Activated CD4-positive, alpha-beta T cell treated with anti-CD3 and anti-CD28 coated beads, Interleukin-2, amount 10 ng/mL, durations not matched to agents 7 days and 5 days (primary cell): ENCODE measurements at regions of chrX and their contacts with region 1.

Region 1: GRCh38 chrX:107672955-107673378 is 44.7 kb downstream of the PRPS1 start:
- DNase-seq: peak; percentile 83
- H3K4me3 Mint-ChIP-seq: peak overlapping the region; percentile 57
- H3K27ac Mint-ChIP-seq: peak overlapping the region; percentile 95
- H3K4me1 Mint-ChIP-seq: peaks cover 51% of the 10 kb centered on the region
- H3K27me3 Mint-ChIP-seq: no peaks in the 10 kb centered on the region

Region 2: GRCh38 chrX:107627838-107628661 is 44.9 kb before region 1 on chrX and contains the start of gene PRPS1:
- CTCF ChIA-PET with region 1: no interaction called
- POLR2A ChIA-PET with region 1: no interaction called
- DNase-seq: peak; percentile 93
- H3K4me3 Mint-ChIP-seq: peak within 1 kb of the TSS; percentile 93
- H3K27ac Mint-ChIP-seq: peak within 1 kb of the TSS; percentile 97
- H3K4me1 Mint-ChIP-seq: peaks cover 27% of the 10 kb centered on the region
- H3K27me3 Mint-ChIP-seq: no peaks in the 10 kb centered on the region
- total RNA-seq, gene PRPS1: 68.9 to 73.4 TPM

Region 3: GRCh38 chrX:107654872-107655761 is 17.9 kb before region 1 on chrX:
- CTCF ChIA-PET with region 1: interaction called, 21 read pairs
- POLR2A ChIA-PET with region 1: no interaction called
- DNase-seq: peak; percentile 70
- H3K4me3 Mint-ChIP-seq: no peak overlapping the region
- H3K27ac Mint-ChIP-seq: peak overlapping the region; percentile 73
- H3K4me1 Mint-ChIP-seq: peaks cover 14% of the 10 kb centered on the region
- H3K27me3 Mint-ChIP-seq: no peaks in the 10 kb centered on the region

Region 4: GRCh38 chrX:107662145-107662544 is 10.8 kb before region 1 on chrX:
- CTCF ChIA-PET with region 1: interaction called, 21 read pairs
- POLR2A ChIA-PET with region 1: no interaction called
- DNase-seq: no peak
- H3K4me3 Mint-ChIP-seq: no peak overlapping the region
- H3K27ac Mint-ChIP-seq: no peak overlapping the region
- H3K4me1 Mint-ChIP-seq: peaks cover under 1% of the 10 kb centered on the region
- H3K27me3 Mint-ChIP-seq: no peaks in the 10 kb centered on the region

Region 5: GRCh38 chrX:107684956-107685385 is 12.0 kb after region 1 on chrX:
- CTCF ChIA-PET with region 1: interaction called, 21 read pairs
- POLR2A ChIA-PET with region 1: no interaction called
- DNase-seq: no peak
- H3K4me3 Mint-ChIP-seq: no peak overlapping the region
- H3K27ac Mint-ChIP-seq: peak overlapping the region; percentile 64
- H3K4me1 Mint-ChIP-seq: peaks cover 45% of the 10 kb centered on the region
- H3K27me3 Mint-ChIP-seq: no peaks in the 10 kb centered on the region

Region 6: DNA sequence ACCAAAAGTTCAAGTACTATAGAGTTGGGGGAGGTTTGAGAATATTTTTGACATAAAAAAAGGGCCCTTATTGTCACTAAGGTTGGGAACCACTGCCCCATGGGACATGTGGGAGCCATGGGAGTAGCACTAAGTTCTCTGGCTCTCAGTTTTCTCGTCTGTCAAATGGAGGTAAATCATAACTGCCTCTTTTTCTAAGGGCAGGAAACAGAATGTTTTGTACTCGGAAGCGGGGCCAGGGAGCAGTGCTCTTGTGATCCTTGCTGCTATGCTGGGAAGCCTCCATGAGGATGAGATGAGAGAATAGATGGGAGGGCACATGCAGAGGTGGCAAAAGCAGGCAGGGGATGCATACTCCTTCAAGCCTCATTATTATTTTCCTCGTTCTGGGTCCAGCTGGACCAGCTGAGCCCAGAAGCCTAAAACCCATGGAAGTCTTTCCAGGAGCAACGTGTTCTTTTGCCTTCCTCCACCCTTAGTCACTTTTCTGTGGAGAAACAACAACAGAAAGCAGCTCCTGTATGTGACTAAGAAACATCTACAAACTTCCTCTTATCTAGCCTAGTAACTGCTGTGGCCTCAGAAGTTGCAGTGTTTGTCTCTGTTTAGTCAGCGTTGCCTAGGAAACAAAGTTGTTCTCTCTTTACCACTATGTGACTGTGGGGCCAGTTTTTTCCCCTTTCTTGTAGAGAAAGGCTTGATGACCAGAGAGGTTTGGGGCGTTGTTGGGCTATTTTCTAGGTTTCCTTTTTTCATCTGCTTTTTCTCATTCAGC is 37.8 kb after region 1 on chrX:
- CTCF ChIA-PET with region 1: interaction called, 92 read pairs
- POLR2A ChIA-PET with region 1: interaction called, 3 read pairs
- DNase-seq: peak; percentile 83
- H3K4me3 Mint-ChIP-seq: peak overlapping the region; percentile 61
- H3K27ac Mint-ChIP-seq: peak overlapping the region; percentile 93
- H3K4me1 Mint-ChIP-seq: peaks cover 43% of the 10 kb centered on the region
- H3K27me3 Mint-ChIP-seq: no peaks in the 10 kb centered on the region

Region 7: GRCh38 chrX:107716816-107717700 is 44.1 kb after region 1 on chrX:
- CTCF ChIA-PET with region 1: interaction called, 92 read pairs
- POLR2A ChIA-PET with region 1: interaction called, 7 read pairs
- DNase-seq: peak; percentile 90
- H3K4me3 Mint-ChIP-seq: peak overlapping the region; percentile 87
- H3K27ac Mint-ChIP-seq: peak overlapping the region; percentile 95
- H3K4me1 Mint-ChIP-seq: peaks cover 37% of the 10 kb centered on the region
- H3K27me3 Mint-ChIP-seq: no peaks in the 10 kb centered on the region

Region 8: GRCh38 chrX:107776649-107777535 is 103.9 kb after region 1 on chrX:
- CTCF ChIA-PET with region 1: interaction called, 35 read pairs
- POLR2A ChIA-PET with region 1: no interaction called
- DNase-seq: peak; percentile 84
- H3K4me3 Mint-ChIP-seq: peak overlapping the region; percentile 78
- H3K27ac Mint-ChIP-seq: peak overlapping the region; percentile 73
- H3K4me1 Mint-ChIP-seq: peaks cover 12% of the 10 kb centered on the region
- H3K27me3 Mint-ChIP-seq: peaks cover 6% of the 10 kb centered on the region